Activated T-helper 1 cell treated with anti-CD3 and anti-CD28 coated beads, Interleukin-12 subunit alpha, Interleukin-12 subunit beta, Interleukin-2, Interleukin-4 antibody, amounts not matched to agents 30 ng/mL and 10 ng/mL and 1 ng/mL, durations not matched to agents 14 hours and 24 hours and 36 hours (primary cell): ENCODE measurements at regions of chr6 and their contacts with region 1.

Region 1: DNA sequence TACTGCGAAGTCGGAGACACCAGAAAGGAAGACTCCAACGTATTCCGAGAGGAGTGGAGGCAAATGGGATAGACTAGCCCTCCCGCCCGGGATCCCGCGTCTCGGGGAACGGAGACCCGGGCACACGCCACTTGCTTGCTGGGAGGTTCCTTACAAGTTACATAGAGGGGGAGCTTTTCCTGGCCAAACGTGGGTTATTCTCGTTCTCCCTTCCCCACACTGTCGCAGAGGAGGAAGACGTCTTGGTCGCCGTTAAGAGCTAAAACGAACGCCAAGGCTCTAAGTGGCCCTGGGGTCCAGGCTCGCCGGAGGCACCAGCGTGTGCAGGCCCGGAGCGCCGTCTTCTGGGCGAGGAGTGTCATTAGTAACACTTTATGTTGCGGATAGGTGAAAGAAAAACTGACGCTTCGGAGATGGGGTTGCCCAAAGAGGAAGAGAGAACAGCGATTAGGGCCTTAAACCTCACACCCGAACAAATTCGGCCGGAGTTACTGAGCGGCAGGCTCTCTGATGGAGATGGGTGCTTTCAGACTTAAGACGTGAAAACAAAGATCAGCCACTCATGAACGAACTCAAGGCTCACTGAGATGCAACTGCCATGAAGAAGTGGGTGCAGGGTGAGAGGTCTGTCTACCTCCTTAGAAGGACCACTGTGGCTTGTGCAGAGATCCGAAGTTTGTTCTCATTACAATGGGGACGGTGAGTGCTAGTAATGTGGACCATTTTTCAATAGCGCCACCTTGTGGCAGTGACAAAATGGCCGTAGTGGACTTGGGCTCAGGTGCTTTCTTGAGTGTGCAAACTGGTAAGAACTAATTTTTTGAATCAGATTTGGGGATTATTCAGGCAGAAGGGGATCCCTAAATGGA is 11.7 kb upstream of the ZNF311 start:
- DNase-seq: peak; percentile 76
- H3K4me3 Mint-ChIP-seq: peak overlapping the region; percentile 87
- H3K27ac Mint-ChIP-seq: peak overlapping the region; percentile 89
- H3K4me1 Mint-ChIP-seq: peaks cover 22% of the 10 kb centered on the region
- H3K27me3 Mint-ChIP-seq: peaks cover 22% of the 10 kb centered on the region

Region 2: DNA sequence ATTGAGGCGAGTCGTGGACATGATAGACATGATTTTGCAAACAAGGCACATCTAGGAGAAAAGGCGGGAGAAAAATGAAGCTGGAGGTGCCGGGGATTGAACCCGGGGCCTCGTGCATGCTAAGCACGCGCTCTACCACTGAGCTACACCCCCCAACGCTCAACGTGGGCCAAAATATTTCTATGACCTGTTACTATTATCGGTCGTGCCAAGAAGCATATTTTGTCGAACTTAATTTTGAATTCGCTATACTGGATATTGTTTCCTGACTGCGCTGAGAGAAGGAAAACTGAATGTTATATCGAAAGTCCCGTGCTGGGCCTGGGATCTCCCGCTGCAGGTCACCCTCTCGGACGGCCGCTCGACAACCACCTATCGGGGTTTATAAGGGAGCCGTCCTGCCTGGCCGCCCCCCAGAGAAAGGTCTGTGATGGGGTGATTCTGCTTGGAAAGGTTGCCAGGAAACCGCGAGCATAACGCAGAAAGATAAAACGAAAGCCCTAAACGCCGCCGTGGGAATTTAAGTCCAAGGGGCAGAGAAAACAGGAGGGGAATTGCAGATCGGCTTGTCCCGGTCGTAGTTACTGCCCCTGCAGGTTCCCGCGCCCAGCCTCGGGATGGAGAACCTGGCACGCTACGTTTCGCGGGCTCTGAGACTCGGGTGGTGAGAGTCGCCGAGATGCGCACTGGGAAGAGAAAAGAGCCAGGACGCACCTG is 153.0 kb before region 1 on chr6:
- intact Hi-C with region 1: loop called (anchors 10 kb)
- DNase-seq: peak; percentile 80
- H3K4me3 Mint-ChIP-seq: peak overlapping the region; percentile 94
- H3K27ac Mint-ChIP-seq: peak overlapping the region; percentile 93
- H3K4me1 Mint-ChIP-seq: peaks cover 47% of the 10 kb centered on the region
- H3K27me3 Mint-ChIP-seq: peaks cover 17% of the 10 kb centered on the region

Region 3: GRCh38 chr6:28923318-28924102 is 93.3 kb before region 1 on chr6 and contains the start of gene TRIM27:
- intact Hi-C with region 1: loop called (anchors 2 kb)
- DNase-seq: peak; percentile 80
- H3K4me3 Mint-ChIP-seq: peak within 1 kb of the TSS; percentile 93
- H3K27ac Mint-ChIP-seq: peak within 1 kb of the TSS; percentile 91
- H3K4me1 Mint-ChIP-seq: peaks cover 33% of the 10 kb centered on the region
- H3K27me3 Mint-ChIP-seq: no peaks in the 10 kb centered on the region
- total RNA-seq, gene TRIM27: 67.2 and 67.4 TPM in 2 replicates

Region 4: GRCh38 chr6:28981833-28982475 is 34.8 kb before region 1 on chr6:
- intact Hi-C with region 1: loop called (anchors 1 kb)
- DNase-seq: peak; percentile 59
- H3K4me3 Mint-ChIP-seq: peak overlapping the region; percentile 90
- H3K27ac Mint-ChIP-seq: peak overlapping the region; percentile 95
- H3K4me1 Mint-ChIP-seq: peaks cover 59% of the 10 kb centered on the region
- H3K27me3 Mint-ChIP-seq: peaks cover 22% of the 10 kb centered on the region

Region 5: DNA sequence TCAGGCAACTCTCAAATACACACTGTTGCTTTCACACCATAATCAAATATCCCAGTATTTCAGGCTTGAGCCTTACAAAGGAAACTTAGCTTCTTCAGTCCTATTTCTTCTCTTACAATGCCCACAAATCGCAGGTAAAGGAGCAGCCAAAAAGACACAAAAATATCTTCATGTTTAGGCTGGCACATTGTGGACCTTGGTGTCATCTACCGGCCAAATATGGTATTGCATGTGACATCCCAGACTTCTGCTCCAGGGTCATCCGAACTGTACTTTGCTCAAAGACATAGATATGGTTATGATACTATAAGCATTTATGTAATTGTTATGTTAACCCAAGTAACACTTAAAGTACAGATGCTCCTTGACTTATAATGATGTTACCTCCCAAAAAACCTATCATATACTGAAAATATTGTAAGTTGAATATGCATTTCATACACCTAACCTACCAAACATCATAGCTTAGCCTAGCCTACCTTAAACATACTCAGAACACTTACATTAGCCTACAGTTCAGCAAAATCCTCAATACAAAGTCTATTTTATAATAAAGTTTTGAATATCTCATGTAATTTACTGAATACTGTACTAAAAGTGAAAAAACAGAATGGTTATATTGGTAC is 572.7 kb after region 1 on chr6:
- intact Hi-C with region 1: loop called (anchors 2 kb)
- DNase-seq: peak; percentile 40
- H3K4me3 Mint-ChIP-seq: no peak overlapping the region
- H3K27ac Mint-ChIP-seq: no peak overlapping the region
- H3K4me1 Mint-ChIP-seq: no peaks in the 10 kb centered on the region
- H3K27me3 Mint-ChIP-seq: peaks cover 11% of the 10 kb centered on the region